Mammary epithelial cell (primary cell): ENCODE measurements at regions of chr1 and their contacts with region 1.

Region 1: GRCh38 chr1:27650539-27651175 is 15.7 kb upstream of the FGR start:
- DNase-seq: peak; percentile 39
- H3K4me3 ChIP-seq: no peak overlapping the region
- H3K27ac ChIP-seq: no peak overlapping the region
- H3K4me1 ChIP-seq: peaks cover 9% of the 10 kb centered on the region
- H3K27me3 ChIP-seq: no peaks in the 10 kb centered on the region
- CTCF ChIP-seq: no peak

Region 2: GRCh38 chr1:27574871-27575831 is 75.5 kb before region 1 on chr1:
- CTCF ChIA-PET with region 1: no interaction called
- dilution Hi-C with region 1: loop called (anchors 5 kb)
- in situ Hi-C with region 1: no loop called
- intact Hi-C with region 1: no loop called
- DNase-seq: peak; percentile 68
- H3K4me3 ChIP-seq: peak overlapping the region in 2 of 3 experiments; percentile 10 to 18
- H3K27ac ChIP-seq: peak overlapping the region; percentile 20
- H3K4me1 ChIP-seq: peaks cover 70% of the 10 kb centered on the region
- H3K27me3 ChIP-seq: no peaks in the 10 kb centered on the region
- CTCF ChIP-seq: no peak